AG04450 (cell line): ENCODE measurements at regions of chr15 and their contacts with region 1.

Region 1: DNA sequence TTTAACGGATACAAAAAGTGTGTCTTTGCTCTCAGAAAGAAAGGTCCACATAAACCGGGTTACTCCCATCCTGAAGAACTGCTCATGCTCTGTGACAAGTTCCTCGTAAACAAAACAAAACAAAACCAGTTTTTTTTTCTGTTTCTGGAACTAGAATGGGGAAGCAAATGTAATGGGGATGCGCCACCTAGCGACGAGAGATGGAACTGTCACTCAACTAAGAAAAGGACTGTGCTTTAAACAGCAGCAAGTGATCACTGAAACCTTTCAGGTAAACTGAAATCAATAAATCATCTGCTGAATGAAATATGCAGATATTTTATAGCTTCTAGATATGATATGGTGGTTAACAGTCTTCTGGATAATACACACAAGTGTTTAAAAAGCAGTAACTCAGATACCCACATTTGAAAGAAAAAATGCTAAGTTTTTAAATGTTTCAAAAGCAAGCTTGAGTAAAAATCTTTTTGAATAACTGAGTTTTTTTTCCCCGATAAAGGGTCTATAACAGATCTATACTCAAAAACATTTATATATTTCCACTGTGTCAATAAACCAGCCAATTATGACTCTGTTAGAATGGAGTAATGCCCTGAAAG is 10.9 kb downstream of the TM2D3 start:
- DNase-seq: peak; percentile 34
- H3K4me3 ChIP-seq: no peak overlapping the region
- H3K27ac ChIP-seq: no peak overlapping the region
- H3K27me3 ChIP-seq: no peaks in the 10 kb centered on the region
- CTCF ChIP-seq: peak; percentile 94

Region 2: GRCh38 chr15:101288908-101289513 is 352.3 kb before region 1 on chr15:
- CTCF ChIA-PET with region 1: interaction called, 58 read pairs
- POLR2A ChIA-PET with region 1: no interaction called
- DNase-seq: no peak
- H3K4me3 ChIP-seq: no peak overlapping the region
- H3K27ac ChIP-seq: no peak overlapping the region
- H3K27me3 ChIP-seq: no peaks in the 10 kb centered on the region
- CTCF ChIP-seq: peak; percentile 60

Region 3: GRCh38 chr15:101294731-101295606 is 346.3 kb before region 1 on chr15 and contains the start of gene SNRPA1:
- CTCF ChIA-PET with region 1: interaction called, 232 read pairs
- POLR2A ChIA-PET with region 1: no interaction called
- DNase-seq: peak; percentile 81
- H3K4me3 ChIP-seq: peak within 1 kb of the TSS; percentile 65
- H3K27ac ChIP-seq: peak within 1 kb of the TSS; percentile 93
- H3K27me3 ChIP-seq: no peaks in the 10 kb centered on the region
- CTCF ChIP-seq: no peak
- polyA plus RNA-seq, gene SNRPA1: 46.4 and 57.0 TPM in 2 replicates

Region 4: GRCh38 chr15:101320501-101321052 is 320.7 kb before region 1 on chr15:
- CTCF ChIA-PET with region 1: interaction called, 30 read pairs
- POLR2A ChIA-PET with region 1: no interaction called
- DNase-seq: no peak
- H3K4me3 ChIP-seq: no peak overlapping the region
- H3K27ac ChIP-seq: no peak overlapping the region
- H3K27me3 ChIP-seq: peaks cover 36% of the 10 kb centered on the region
- CTCF ChIP-seq: peak; percentile 52

Region 5: GRCh38 chr15:101391981-101392640 is 249.2 kb before region 1 on chr15:
- CTCF ChIA-PET with region 1: no interaction called
- POLR2A ChIA-PET with region 1: no interaction called
- DNase-seq: no peak
- H3K4me3 ChIP-seq: no peak overlapping the region
- H3K27ac ChIP-seq: no peak overlapping the region
- H3K27me3 ChIP-seq: peaks cover 2% of the 10 kb centered on the region
- CTCF ChIP-seq: no peak

Region 6: GRCh38 chr15:101551696-101552591 is 89.3 kb before region 1 on chr15:
- CTCF ChIA-PET with region 1: no interaction called
- POLR2A ChIA-PET with region 1: no interaction called
- DNase-seq: no peak
- H3K4me3 ChIP-seq: no peak overlapping the region
- H3K27ac ChIP-seq: no peak overlapping the region
- H3K27me3 ChIP-seq: no peaks in the 10 kb centered on the region
- CTCF ChIP-seq: no peak

Region 7: GRCh38 chr15:101615986-101616848 is 25.0 kb before region 1 on chr15:
- CTCF ChIA-PET with region 1: interaction called, 31 read pairs
- POLR2A ChIA-PET with region 1: no interaction called
- DNase-seq: no peak
- H3K4me3 ChIP-seq: 0 out of 2 replicates have a peak overlapping the region, but pooled peaks have one; percentile 12
- H3K27ac ChIP-seq: no peak overlapping the region
- H3K27me3 ChIP-seq: peaks cover 4% of the 10 kb centered on the region
- CTCF ChIP-seq: no peak

Region 8: GRCh38 chr15:101652098-101652782 is 11.0 kb after region 1 on chr15 and contains the start of gene TM2D3:
- CTCF ChIA-PET with region 1: interaction called, 33 read pairs
- POLR2A ChIA-PET with region 1: interaction called, 3 read pairs
- DNase-seq: peak; percentile 72
- H3K4me3 ChIP-seq: peak within 1 kb of the TSS; percentile 94
- H3K27ac ChIP-seq: peak within 1 kb of the TSS; percentile 88
- H3K27me3 ChIP-seq: no peaks in the 10 kb centered on the region
- CTCF ChIP-seq: peak; percentile 76
- polyA plus RNA-seq, gene TM2D3: 49.0 and 64.2 TPM in 2 replicates

Region 9: GRCh38 chr15:101686718-101687117 is 45.5 kb after region 1 on chr15:
- CTCF ChIA-PET with region 1: interaction called, 10 read pairs
- POLR2A ChIA-PET with region 1: no interaction called
- DNase-seq: no peak
- H3K4me3 ChIP-seq: no peak overlapping the region
- H3K27ac ChIP-seq: no peak overlapping the region
- H3K27me3 ChIP-seq: no peaks in the 10 kb centered on the region
- CTCF ChIP-seq: no peak

Region 10: GRCh38 chr15:101731746-101732145 is 90.5 kb after region 1 on chr15:
- CTCF ChIA-PET with region 1: no interaction called
- POLR2A ChIA-PET with region 1: no interaction called
- DNase-seq: no peak
- H3K4me3 ChIP-seq: no peak overlapping the region
- H3K27ac ChIP-seq: no peak overlapping the region
- H3K27me3 ChIP-seq: no peaks in the 10 kb centered on the region
- CTCF ChIP-seq: no peak